PC-3 (cell line): ENCODE measurements at regions of chr7 and their contacts with region 1.

Region 1: DNA sequence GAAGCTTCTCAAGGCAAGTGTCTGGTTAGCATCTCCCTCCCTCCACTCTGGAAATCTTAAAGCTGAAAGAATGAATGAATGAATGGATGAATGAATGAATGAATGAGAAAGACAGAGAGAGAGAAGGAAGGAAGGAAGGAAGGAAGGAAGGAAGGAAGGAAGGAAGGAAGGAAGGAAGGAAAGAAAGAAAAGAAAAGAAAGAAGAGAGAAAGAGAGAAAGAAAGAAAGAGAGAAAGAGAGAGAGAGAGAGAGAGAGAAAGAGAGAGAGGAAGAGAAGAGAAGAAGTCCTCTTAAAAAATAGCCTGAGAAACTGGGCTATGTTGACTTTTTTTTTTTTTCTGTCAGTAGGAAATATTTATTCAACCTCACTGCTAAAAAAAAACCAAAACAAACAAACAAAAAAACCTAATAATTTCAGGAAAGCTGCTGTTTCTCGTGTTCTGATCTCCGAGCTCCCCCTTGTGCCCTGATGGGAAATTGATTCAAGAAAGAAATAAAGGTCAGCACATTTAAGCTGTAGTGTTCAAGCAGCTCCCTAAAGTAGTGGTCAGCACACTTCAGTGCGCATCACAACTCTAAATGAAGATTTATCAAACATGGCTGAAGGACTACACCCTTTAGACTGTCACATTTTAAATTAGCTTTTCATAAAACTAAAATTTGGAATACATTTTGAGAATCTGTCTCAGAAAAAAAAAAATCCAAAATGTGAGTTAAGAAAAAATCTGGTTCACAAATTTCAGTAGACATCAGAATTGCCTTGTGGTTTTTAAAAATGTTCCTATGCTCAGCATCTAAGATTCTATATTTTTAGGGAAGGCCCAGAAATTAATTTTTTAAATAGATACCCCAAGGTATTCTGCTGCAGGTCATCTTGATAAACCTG is 154.3 kb downstream of the ELAPOR2 start:
- DNase-seq: peak; percentile 54
- ATAC-seq: no peak
- H3K4me3 ChIP-seq: no peak overlapping the region
- H3K27ac ChIP-seq: no peak overlapping the region
- H3K4me1 ChIP-seq: no peaks in the 10 kb centered on the region
- H3K27me3 ChIP-seq: no peaks in the 10 kb centered on the region
- CTCF ChIP-seq: peak; percentile 82

Region 2: GRCh38 chr7:85890244-85890811 is 1014.9 kb before region 1 on chr7:
- CTCF ChIA-PET with region 1: no interaction called
- POLR2A ChIA-PET with region 1: no interaction called
- intact Hi-C with region 1: loop called (anchors 1 kb)
- DNase-seq: peak; percentile 47
- ATAC-seq: peak; percentile 63
- H3K4me3 ChIP-seq: no peak overlapping the region
- H3K27ac ChIP-seq: no peak overlapping the region
- H3K4me1 ChIP-seq: no peaks in the 10 kb centered on the region
- H3K27me3 ChIP-seq: peaks cover 22% of the 10 kb centered on the region; the same call in 1 of the 2 replicates
- CTCF ChIP-seq: peak; percentile 72

Region 3: DNA sequence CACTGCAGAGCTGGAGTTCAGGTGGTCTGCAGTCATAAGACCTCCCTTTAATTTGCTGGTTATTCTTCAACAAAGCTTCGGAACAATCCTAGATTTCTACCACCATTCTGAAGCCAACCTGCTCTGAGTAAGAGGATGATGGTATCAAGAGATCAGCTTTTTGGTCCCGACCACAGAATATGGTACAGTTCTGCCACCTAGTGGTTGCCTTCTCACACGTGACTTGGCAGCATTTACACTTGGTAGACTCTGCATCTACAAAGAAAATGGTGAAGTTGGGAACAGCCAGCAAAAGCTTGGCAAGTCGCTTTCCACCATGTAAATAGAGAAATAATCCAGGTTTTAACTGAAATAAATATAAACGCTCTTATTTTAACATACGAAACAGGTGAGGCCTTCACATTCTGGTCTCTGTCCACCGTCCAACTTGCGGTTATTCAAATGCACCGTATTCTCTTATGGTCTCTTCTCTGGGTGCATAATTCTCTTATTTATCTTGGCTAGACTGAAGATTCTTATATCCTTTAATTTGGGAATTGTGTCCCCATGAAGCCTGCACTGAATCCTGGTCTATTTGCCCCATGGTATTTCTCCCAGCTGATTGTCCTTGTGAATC is 435.4 kb before region 1 on chr7:
- CTCF ChIA-PET with region 1: no interaction called
- POLR2A ChIA-PET with region 1: no interaction called
- intact Hi-C with region 1: loop called (anchors 10 kb)
- DNase-seq: peak; percentile 84
- ATAC-seq: peak; percentile 85
- H3K4me3 ChIP-seq: no peak overlapping the region
- H3K27ac ChIP-seq: no peak overlapping the region
- H3K4me1 ChIP-seq: no peaks in the 10 kb centered on the region
- H3K27me3 ChIP-seq: peaks cover 17% of the 10 kb centered on the region
- CTCF ChIP-seq: peak; percentile 82

Region 4: GRCh38 chr7:86598311-86598710 is 306.9 kb before region 1 on chr7:
- CTCF ChIA-PET with region 1: no interaction called
- POLR2A ChIA-PET with region 1: no interaction called
- intact Hi-C with region 1: loop called (anchors 10 kb)
- DNase-seq: peak; percentile 38
- ATAC-seq: peak; percentile 29; the same call in 1 of the 2 replicates
- H3K4me3 ChIP-seq: no peak overlapping the region
- H3K27ac ChIP-seq: no peak overlapping the region
- H3K4me1 ChIP-seq: no peaks in the 10 kb centered on the region
- H3K27me3 ChIP-seq: no peaks in the 10 kb centered on the region
- CTCF ChIP-seq: peak; percentile 53

Region 5: DNA sequence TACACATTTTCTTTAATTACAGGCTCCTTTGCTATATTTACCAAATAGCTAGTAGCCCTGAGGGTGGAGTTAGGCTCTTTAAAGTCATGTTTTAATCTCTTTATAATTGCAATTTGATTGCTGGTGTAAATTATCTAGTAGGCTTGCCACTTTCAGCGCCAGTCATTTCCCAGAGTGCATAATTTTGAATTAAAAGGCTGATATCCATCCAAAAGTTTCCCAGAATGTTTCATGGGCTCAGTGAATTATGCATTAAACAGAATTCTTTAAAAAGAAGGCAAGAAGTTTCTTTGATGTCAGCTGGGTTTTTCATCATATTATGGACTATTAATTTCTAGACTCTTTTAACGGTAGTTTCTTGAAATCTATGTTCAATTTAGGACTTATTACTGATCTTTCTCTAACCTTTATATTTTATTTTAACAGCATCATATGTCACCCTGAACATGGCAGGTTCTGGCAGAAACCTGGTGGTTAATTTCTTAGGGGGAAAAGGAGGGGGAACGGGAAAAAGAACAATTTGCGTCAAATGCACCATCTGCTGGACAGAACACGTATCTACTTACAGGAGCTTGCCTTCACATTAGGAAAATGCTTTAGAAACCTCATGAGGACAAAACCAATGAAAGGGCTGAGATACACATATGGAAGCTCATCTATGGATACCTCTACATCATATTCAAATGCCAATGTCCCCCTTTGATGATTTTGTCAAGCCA is 90.4 kb before region 1 on chr7:
- CTCF ChIA-PET with region 1: interaction called, 8 read pairs
- POLR2A ChIA-PET with region 1: no interaction called
- intact Hi-C with region 1: loop called (anchors 2 kb)
- DNase-seq: peak; percentile 38
- ATAC-seq: peak; percentile 73
- H3K4me3 ChIP-seq: no peak overlapping the region
- H3K27ac ChIP-seq: no peak overlapping the region
- H3K4me1 ChIP-seq: no peaks in the 10 kb centered on the region
- H3K27me3 ChIP-seq: peaks cover 41% of the 10 kb centered on the region
- CTCF ChIP-seq: peak; percentile 67

Region 6: DNA sequence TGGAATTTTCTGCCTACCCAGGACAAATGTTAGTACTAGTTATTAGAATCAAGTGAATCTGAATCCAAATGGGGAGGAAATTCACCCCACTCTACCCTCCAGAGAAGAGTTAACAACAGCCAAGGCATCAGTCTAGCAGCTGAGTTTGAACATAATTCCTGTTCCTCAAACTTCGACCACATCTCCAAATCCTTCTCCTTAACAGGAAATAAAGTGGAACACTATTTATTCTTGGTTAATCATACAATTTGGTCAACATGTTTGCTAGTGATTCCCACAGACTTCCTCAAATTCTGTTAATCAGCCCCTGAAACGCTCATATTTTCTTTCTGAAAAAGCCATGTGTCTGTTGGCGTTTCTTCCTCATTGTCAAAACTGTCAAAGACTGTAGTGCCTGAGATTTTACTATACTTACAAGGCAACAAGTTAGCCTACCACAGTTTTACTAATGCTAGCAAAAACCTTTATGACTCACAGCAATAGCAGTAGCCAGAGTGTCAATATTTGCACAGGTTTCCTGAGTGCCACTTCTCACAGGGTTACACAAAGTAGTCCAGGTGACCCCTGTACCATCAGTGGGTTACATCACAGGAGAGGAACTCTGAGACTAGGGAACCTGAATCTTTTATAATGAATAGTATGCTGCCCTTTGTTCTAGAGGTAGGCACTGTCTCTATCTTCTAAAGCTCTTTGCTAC is 58.5 kb before region 1 on chr7:
- CTCF ChIA-PET with region 1: interaction called, 4 read pairs
- POLR2A ChIA-PET with region 1: no interaction called
- intact Hi-C with region 1: loop called (anchors 2 kb)
- DNase-seq: peak; percentile 92
- ATAC-seq: peak; percentile 95
- H3K4me3 ChIP-seq: peak overlapping the region; percentile 44
- H3K27ac ChIP-seq: peak overlapping the region; percentile 90
- H3K4me1 ChIP-seq: peaks cover 32% of the 10 kb centered on the region
- H3K27me3 ChIP-seq: no peaks in the 10 kb centered on the region
- CTCF ChIP-seq: no peak